Activated naive CD4-positive, alpha-beta T cell treated with anti-CD3 and anti-CD28 coated beads for 36 hours (primary cell): ENCODE measurements at regions of chr9 and their contacts with region 1.

Region 1: DNA sequence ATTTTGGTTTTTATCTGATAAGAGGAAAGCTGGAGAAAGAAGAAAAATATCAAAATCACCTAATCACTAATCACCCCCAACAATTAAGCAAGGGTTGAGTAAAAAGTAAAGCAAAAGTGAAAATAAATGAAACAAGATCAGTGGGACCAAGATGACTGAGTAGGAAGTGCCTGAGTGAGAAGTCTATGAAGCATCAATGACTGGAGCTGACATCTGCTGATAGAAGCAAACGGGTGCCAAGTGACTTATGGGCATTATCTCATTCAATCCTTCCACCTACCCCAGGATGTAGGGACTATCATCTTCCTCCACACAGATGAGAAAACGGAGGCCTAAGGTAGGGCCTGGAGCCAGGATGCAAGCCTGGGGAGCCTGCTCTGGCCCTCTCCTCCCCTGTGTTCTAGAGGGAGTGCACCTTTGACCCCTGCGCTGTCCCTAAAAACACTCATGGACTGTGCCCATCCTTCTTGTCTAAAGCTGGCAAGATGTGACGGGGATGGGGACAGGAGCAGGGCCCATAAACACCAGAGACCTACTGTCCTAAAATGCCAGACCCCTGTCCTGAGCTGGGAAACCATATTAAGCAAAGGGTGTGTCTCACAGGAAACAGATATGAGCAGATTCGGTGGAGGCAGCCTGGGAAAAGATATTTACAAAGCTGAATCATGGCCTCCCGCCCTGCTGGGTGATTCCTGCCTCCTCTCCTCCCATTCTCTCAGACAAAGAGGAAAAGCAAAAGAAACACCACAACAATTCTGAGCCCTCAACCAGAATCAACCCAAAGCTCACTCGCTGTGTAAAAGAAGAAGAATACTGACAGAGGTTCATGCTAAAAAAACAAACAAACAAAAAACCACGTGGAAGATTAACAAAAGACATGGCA is 116.0 kb downstream of the AUH start:
- DNase-seq: peak; percentile 58
- H3K4me3 Mint-ChIP-seq: no peak overlapping the region
- H3K27ac Mint-ChIP-seq: peak overlapping the region; percentile 64
- H3K4me1 Mint-ChIP-seq: peaks cover 18% of the 10 kb centered on the region
- H3K27me3 Mint-ChIP-seq: no peaks in the 10 kb centered on the region

Region 2: GRCh38 chr9:91094324-91095088 is 151.2 kb before region 1 on chr9:
- CTCF ChIA-PET with region 1: no interaction called
- intact Hi-C with region 1: no loop called
- DNase-seq: no peak
- H3K4me3 Mint-ChIP-seq: no peak overlapping the region
- H3K27ac Mint-ChIP-seq: no peak overlapping the region
- H3K4me1 Mint-ChIP-seq: peaks cover 11% of the 10 kb centered on the region
- H3K27me3 Mint-ChIP-seq: peaks cover 2% of the 10 kb centered on the region

Region 3: GRCh38 chr9:91273853-91274552 is 28.3 kb after region 1 on chr9:
- CTCF ChIA-PET with region 1: no interaction called
- intact Hi-C with region 1: loop called (anchors 2 kb)
- DNase-seq: peak; percentile 25
- H3K4me3 Mint-ChIP-seq: no peak overlapping the region
- H3K27ac Mint-ChIP-seq: no peak overlapping the region
- H3K4me1 Mint-ChIP-seq: peaks cover 8% of the 10 kb centered on the region
- H3K27me3 Mint-ChIP-seq: no peaks in the 10 kb centered on the region